ENCODE measurements at regions of chr2 and their contacts with region 1.

Region 1: GRCh38 chr2:172596776-172597175 is 40.9 kb downstream of the PDK1 start:
- DNase-seq: no peak
- H3K4me3 ChIP-seq: no peak overlapping the region
- H3K27ac ChIP-seq: no peak overlapping the region
- H3K4me1 ChIP-seq: no peaks in the 10 kb centered on the region
- H3K27me3 ChIP-seq: no peaks in the 10 kb centered on the region
- CTCF ChIP-seq: no peak
- POLR2A ChIP-seq: no peak

Region 2: GRCh38 chr2:172710584-172711024 is 113.8 kb after region 1 on chr2:
- intact Hi-C with region 1: loop called (anchors 10 kb)
- DNase-seq: peak; percentile 37 to 43
- H3K4me3 ChIP-seq: no peak overlapping the region
- H3K27ac ChIP-seq: no peak overlapping the region
- H3K4me1 ChIP-seq: no peaks in the 10 kb centered on the region
- H3K27me3 ChIP-seq: no peaks in the 10 kb centered on the region
- CTCF ChIP-seq: peak; percentile 66 to 73 (median 69)
- POLR2A ChIP-seq: no peak

Region 3: DNA sequence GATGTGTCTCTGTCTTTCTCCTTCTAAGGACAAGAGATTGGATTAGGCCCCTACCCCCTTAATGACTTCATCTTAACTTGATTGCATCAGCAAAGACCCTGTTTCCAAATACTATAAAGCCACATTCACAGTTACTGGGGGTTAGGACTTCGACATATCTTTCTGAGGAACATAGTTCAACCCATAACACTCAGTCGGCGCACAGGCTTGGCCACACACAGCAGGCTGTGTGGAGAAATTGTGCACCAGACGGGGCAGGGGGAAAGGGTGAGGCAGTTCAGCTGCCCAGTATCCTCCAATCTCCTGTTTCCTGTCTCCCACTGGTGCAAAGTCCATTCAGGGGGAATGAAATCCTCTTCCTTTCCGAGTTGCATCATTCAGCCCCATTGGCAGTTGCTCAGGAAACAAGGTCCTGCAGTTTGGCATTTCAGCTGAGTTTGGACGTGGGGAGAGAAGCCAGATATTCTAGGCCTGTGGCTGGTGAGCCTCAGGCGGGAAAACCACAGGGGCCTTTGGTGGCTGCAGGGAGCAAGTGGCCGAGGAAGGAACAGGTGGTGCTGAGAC is 129.5 kb after region 1 on chr2:
- intact Hi-C with region 1: no loop called
- DNase-seq: no peak
- H3K4me3 ChIP-seq: no peak overlapping the region
- H3K27ac ChIP-seq: no peak overlapping the region
- H3K4me1 ChIP-seq: no peaks in the 10 kb centered on the region
- H3K27me3 ChIP-seq: no peaks in the 10 kb centered on the region
- CTCF ChIP-seq: no peak
- POLR2A ChIP-seq: no peak

Measured in uterus (tissue), 4 donors.